ENCODE measurements at regions of chrX and their contacts with region 1.

Region 1: DNA sequence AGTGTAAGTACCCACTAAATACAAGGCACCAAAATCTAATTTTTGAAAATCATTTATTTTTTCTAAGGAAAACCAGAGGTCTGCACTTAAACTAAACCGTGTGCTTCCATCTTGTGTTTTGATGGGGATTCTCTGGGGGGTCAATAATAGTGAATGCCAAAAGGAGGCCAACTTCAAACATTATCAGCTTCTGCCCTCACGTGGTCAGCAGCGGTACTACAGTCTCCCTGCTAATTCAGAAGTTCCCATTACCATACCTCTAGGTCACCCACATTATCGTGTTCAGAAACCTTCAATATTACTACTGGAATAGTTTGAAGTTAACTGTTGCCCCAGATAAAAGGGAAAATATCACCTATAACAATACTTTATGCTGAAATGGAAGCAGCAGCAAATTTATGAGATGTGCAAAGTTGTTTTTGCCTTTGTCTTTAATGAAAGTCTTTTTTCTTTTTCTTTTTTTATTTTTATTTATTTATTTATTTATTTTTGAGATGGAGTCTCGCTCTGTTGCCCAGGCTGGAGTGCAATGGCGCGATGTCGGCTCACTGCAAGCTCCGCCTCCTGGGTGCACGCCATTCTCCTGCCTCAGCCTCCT is 17.3 kb downstream of the CTPS2 start:
- DNase-seq: peak in 8 of 9 donors; percentile 14 to 62 (median 46)
- ATAC-seq: peak; percentile 84
- H3K4me3 ChIP-seq: no peak overlapping the region
- H3K4me3 Mint-ChIP-seq: no peak overlapping the region
- H3K27ac ChIP-seq: no peak overlapping the region
- H3K27ac Mint-ChIP-seq: peak overlapping the region in 1 of 9 donors; percentile 56
- H3K4me1 ChIP-seq: no peaks in the 10 kb centered on the region
- H3K4me1 Mint-ChIP-seq: peaks cover 0 to 5% (median 0%) of the 10 kb centered on the region in 7 donors
- H3K27me3 ChIP-seq: no peaks in the 10 kb centered on the region
- H3K27me3 Mint-ChIP-seq: no peaks in the 10 kb centered on the region

Region 2: DNA sequence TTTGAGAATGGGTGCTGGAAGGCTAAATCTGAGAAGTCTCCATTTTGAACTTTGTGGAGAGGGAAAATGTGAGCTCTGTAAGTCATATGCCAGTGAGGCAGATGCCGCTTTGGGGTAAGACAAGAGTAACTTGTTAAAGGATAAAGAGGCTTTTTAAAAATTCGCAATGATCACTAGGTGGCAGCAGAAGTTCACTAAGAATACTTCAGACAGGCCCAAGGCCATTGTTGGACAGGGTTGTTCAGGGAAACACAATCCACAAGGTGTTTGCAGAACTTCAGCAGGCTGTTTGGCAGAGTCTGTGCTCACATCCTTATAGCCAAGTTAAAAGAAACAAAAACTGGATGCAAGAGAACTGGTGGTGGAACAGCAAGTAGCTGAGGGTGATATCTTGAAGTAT is 1346.1 kb before region 1 on chrX:
- CTCF ChIA-PET with region 1: no interaction called
- POLR2A ChIA-PET with region 1: no interaction called
- intact Hi-C with region 1: loop called in 1 of 2 experiments (anchors 2 kb)
- DNase-seq: peak in 5 of 9 donors; percentile 17 to 27 (median 22)
- ATAC-seq: peak; percentile 55
- H3K4me3 ChIP-seq: no peak overlapping the region
- H3K4me3 Mint-ChIP-seq: no peak overlapping the region
- H3K27ac ChIP-seq: no peak overlapping the region
- H3K27ac Mint-ChIP-seq: no peak overlapping the region
- H3K4me1 ChIP-seq: no peaks in the 10 kb centered on the region
- H3K4me1 Mint-ChIP-seq: peaks cover 0 to 6% (median 0%) of the 10 kb centered on the region in 7 donors
- H3K27me3 ChIP-seq: no peaks in the 10 kb centered on the region
- H3K27me3 Mint-ChIP-seq: peaks cover 0 to 10% (median 1%) of the 10 kb centered on the region in 5 donors

Region 3: GRCh38 chrX:15815779-15816437 is 879.3 kb before region 1 on chrX:
- CTCF ChIA-PET with region 1: no interaction called
- POLR2A ChIA-PET with region 1: no interaction called
- intact Hi-C with region 1: loop called in 1 of 2 experiments (anchors 1 kb)
- DNase-seq: peak in 5 of 9 donors; percentile 11 to 32 (median 18)
- ATAC-seq: peak; percentile 82
- H3K4me3 ChIP-seq: no peak overlapping the region
- H3K4me3 Mint-ChIP-seq: peak overlapping the region in 5 of 10 donors; percentile 13 to 63 (median 39)
- H3K27ac ChIP-seq: no peak overlapping the region
- H3K27ac Mint-ChIP-seq: peak overlapping the region; percentile 24 to 88 (median 52)
- H3K4me1 ChIP-seq: peaks cover 14 to 26% of the 10 kb centered on the region in 2 donors
- H3K4me1 Mint-ChIP-seq: peaks cover 6 to 47% (median 36%) of the 10 kb centered on the region in 7 donors
- H3K27me3 ChIP-seq: no peaks in the 10 kb centered on the region
- H3K27me3 Mint-ChIP-seq: no peaks in the 10 kb centered on the region

Region 4: GRCh38 chrX:16436348-16437188 is 258.6 kb before region 1 on chrX:
- CTCF ChIA-PET with region 1: no interaction called
- POLR2A ChIA-PET with region 1: no interaction called
- intact Hi-C with region 1: loop called in 1 of 2 experiments (anchors 1 kb)
- DNase-seq: peak; percentile 19 to 55 (median 44)
- ATAC-seq: peak; percentile 78
- H3K4me3 ChIP-seq: no peak overlapping the region
- H3K4me3 Mint-ChIP-seq: peak overlapping the region in 1 of 10 donors; percentile 44
- H3K27ac ChIP-seq: no peak overlapping the region
- H3K27ac Mint-ChIP-seq: peak overlapping the region in 1 of 9 donors; percentile 0
- H3K4me1 ChIP-seq: peaks cover 0 to 15% of the 10 kb centered on the region in 2 donors
- H3K4me1 Mint-ChIP-seq: peaks cover 3 to 19% (median 15%) of the 10 kb centered on the region in 7 donors
- H3K27me3 ChIP-seq: no peaks in the 10 kb centered on the region
- H3K27me3 Mint-ChIP-seq: no peaks in the 10 kb centered on the region